BJ (cell line): ENCODE measurements at regions of chr6 and their contacts with region 1.

Region 1: GRCh38 chr6:148332088-148332487 is 10.6 kb upstream of the SASH1 start:
- DNase-seq: no peak
- H3K4me3 ChIP-seq: no peak overlapping the region
- H3K27me3 ChIP-seq: no peaks in the 10 kb centered on the region
- CTCF ChIP-seq: no peak

Region 2: DNA sequence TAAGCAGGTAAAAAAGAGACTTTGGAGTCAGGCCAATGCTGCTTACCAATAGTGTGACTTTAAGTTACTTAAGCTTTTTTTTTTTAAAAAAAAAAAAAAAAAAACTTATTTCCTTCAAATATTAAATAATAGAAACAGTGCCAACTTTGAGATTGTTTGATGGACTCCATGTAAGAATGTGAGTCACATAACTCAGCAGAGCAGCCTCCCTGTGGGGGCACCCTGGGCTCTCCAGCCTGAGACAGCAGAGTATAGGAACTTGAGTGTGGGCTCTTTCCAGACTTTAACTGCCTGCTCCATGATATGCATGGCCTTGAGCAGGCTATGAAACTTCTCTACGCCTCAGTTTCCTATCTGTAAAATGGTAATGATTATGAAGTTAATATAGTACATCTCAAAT is 936.9 kb before region 1 on chr6:
- CTCF ChIA-PET with region 1: no interaction called
- POLR2A ChIA-PET with region 1: interaction called, 17 read pairs
- DNase-seq: no peak
- H3K4me3 ChIP-seq: no peak overlapping the region
- H3K27me3 ChIP-seq: no peaks in the 10 kb centered on the region
- CTCF ChIP-seq: no peak

Region 3: DNA sequence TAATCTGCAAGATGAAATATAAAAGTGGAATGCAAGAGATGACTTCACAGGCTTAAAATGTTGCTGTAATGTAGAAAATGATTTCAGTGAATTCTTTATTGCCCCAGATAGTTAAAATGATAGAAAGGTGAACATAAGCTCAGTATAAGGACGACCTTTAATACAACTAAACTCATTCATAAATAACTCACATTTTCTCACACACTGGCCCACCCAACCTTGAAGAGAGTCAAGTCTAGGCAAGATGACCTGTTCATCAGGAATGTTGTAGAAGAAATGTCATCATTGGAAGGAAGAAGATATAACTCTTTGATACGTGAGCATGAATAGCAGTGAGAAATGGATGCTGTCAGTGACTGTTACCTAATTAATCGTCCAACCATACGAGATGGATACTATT is 100.5 kb before region 1 on chr6:
- CTCF ChIA-PET with region 1: no interaction called
- POLR2A ChIA-PET with region 1: no interaction called
- DNase-seq: peak; percentile 76
- H3K4me3 ChIP-seq: no peak overlapping the region
- H3K27me3 ChIP-seq: no peaks in the 10 kb centered on the region
- CTCF ChIP-seq: no peak

Region 4: GRCh38 chr6:148307424-148308204 is 24.5 kb before region 1 on chr6:
- CTCF ChIA-PET with region 1: no interaction called
- POLR2A ChIA-PET with region 1: no interaction called
- DNase-seq: no peak
- H3K4me3 ChIP-seq: no peak overlapping the region
- H3K27me3 ChIP-seq: no peaks in the 10 kb centered on the region
- CTCF ChIP-seq: no peak

Region 5: GRCh38 chr6:148342357-148343046 is 10.4 kb after region 1 on chr6 and contains the start of gene SASH1:
- CTCF ChIA-PET with region 1: no interaction called
- POLR2A ChIA-PET with region 1: no interaction called
- DNase-seq: no peak
- H3K4me3 ChIP-seq: peak within 1 kb of the TSS; percentile 87
- H3K27me3 ChIP-seq: no peaks in the 10 kb centered on the region
- CTCF ChIP-seq: no peak
- polyA plus RNA-seq, gene SASH1: 30.4 and 32.2 TPM in 2 replicates

Region 6: GRCh38 chr6:148406579-148407371 is 74.7 kb after region 1 on chr6:
- CTCF ChIA-PET with region 1: no interaction called
- POLR2A ChIA-PET with region 1: interaction called, 14 read pairs
- DNase-seq: no peak
- H3K4me3 ChIP-seq: no peak overlapping the region
- H3K27me3 ChIP-seq: no peaks in the 10 kb centered on the region
- CTCF ChIP-seq: no peak